ENCODE measurements at regions of chr16 and their contacts with region 1.

Region 1: DNA sequence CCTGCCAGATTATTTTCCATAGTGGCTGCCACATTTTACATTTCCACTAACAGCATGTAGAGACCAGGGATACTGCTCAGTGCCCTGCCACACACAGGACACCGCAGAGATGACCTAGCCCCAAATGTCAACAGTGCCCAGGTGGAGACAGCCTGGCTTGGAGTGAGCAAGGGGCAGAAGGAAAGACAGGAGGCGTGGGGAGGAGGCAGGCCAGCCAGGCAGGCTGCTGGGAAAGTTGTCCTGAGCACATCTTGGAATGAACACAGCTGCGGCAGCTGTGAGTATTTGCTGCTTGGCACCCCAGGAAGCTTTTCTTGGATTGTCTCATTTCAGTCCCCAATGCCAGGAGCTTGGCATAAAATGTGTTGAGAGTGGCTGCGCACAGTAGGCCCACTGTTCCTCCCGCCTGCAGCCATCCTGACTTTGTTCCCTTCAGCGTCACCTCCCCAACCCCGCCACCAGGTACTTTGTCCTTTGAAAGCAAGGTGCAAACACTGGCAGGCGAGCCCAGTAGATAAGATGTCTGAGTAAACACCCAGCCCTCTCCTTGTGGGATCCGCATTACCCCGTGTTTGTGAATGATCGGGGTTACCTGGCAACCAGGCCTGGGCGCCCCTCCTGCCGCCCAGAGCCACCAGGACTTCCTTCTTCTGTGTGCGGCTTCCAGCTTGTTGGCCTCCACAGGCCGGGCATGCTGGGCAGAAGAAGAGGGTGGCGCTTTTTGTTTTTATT is 114.0 kb downstream of the CMIP start:
- DNase-seq: no peak
- H3K4me3 ChIP-seq: no peak overlapping the region
- CTCF ChIP-seq: no peak

Region 2: GRCh38 chr16:81437865-81438264 is 120.7 kb before region 1 on chr16:
- in situ Hi-C with region 1: no loop called
- DNase-seq: no peak
- H3K4me3 ChIP-seq: no peak overlapping the region
- CTCF ChIP-seq: no peak

Region 3: DNA sequence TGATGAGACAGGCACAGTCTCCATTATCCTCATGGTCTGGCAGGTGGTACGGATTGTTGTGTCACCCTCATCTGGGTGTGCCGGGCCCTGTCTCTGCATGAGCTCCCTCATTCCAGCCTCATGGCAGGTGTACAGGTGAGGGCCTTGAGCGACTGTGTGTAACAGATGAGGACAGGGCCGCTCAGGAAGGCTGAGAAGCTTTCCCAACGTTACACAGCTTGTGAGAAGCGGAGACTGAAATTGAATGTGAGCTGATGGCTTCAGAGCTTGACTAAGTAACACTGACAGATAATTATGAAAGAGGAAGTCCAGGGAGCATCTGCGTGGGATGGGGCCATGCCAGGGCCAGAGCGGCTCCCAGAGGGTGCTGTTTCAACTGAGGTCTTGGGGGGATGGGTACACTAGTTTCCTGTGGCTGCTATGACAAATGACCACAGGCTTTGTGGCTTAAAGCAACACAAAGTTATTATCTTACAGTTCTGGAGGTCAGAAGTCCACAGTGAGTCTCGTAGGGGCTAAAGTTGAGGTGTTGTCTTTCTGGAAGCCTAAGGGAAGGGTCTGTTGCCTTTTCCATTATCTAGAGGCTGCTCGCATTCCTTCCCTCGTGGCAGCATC is 77.3 kb before region 1 on chr16:
- in situ Hi-C with region 1: no loop called
- DNase-seq: no peak
- H3K4me3 ChIP-seq: no peak overlapping the region
- CTCF ChIP-seq: no peak

Region 4: GRCh38 chr16:81493755-81494433 is 64.7 kb before region 1 on chr16:
- in situ Hi-C with region 1: loop called (anchors 5 kb)
- DNase-seq: no peak
- H3K4me3 ChIP-seq: no peak overlapping the region
- CTCF ChIP-seq: no peak

Region 5: GRCh38 chr16:81600901-81601428 is 42.4 kb after region 1 on chr16:
- in situ Hi-C with region 1: no loop called
- DNase-seq: no peak
- H3K4me3 ChIP-seq: no peak overlapping the region
- CTCF ChIP-seq: no peak

Region 6: GRCh38 chr16:81668243-81669097 is 109.9 kb after region 1 on chr16:
- in situ Hi-C with region 1: no loop called
- DNase-seq: no peak
- H3K4me3 ChIP-seq: no peak overlapping the region
- CTCF ChIP-seq: no peak